CD4-positive, alpha-beta memory T cell (primary cell): ENCODE measurements at regions of chr14 and their contacts with region 1.

Region 1: DNA sequence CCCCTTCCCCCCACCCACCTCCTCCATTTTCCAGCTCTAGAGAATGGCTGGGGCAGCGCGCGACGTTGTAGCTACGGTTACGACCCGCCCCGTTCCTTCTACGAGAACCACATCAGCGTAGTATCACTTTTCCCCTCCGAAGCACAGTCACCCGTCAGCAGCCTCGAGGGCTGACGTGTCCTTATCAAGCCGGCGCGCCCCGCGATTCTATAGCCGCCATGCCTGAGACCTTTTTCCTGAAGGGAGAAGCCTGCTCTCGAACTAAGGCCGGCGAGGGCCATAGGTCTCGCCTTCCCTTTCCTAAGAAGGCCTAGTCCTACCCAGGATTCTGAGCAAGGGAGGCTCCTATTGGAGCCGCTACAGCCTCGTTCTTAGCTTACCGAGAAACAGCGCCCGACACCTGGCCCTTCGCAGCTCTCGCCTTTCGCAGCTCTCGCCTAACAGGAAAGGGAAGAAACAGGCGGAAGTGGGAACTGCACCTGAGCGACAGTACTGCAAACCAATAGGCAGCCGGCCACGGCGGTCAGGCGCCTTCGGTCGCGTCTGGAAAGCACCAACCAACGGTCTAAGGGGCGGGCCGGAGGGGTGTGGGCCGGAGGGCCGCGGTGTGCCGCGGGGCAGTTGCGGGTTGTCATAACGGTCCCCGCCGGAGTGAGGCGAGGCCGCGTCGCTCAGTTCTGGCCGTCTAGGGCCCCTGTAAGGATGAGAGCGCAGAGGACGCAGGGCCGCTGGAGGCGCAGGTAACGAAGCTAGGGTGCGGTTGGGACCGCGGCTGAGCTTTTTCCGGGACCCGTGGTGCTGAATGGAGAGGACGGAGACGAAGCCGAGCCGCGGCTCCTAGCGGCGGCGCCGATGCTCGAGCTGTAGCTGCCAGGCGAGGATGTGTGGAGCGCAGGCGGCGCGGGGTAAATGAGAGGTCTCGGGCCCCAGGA is at the starts of genes MGAT2 and RPL36AL:
- DNase-seq: peak; percentile 95 to 97 (median 96)
- H3K4me3 ChIP-seq: peak within 1 kb of the TSS; percentile 99 to 100
- H3K4me3 Mint-ChIP-seq: peak within 1 kb of the TSS; percentile 95 to 99 (median 96)
- H3K27ac ChIP-seq: peak within 1 kb of the TSS; percentile 98
- H3K27ac Mint-ChIP-seq: peak within 1 kb of the TSS; percentile 98 to 100 (median 99)
- H3K4me1 ChIP-seq: peaks cover 65% of the 10 kb centered on the region
- H3K4me1 Mint-ChIP-seq: peaks cover 34 to 69% (median 43%) of the 10 kb centered on the region in 4 donors
- H3K27me3 ChIP-seq: no peaks in the 10 kb centered on the region
- H3K27me3 Mint-ChIP-seq: no peaks in the 10 kb centered on the region
- total RNA-seq, gene MGAT2: 58.5 to 58.7 TPM
- total RNA-seq, gene RPL36AL: 416 to 441 TPM

Region 2: GRCh38 chr14:49447540-49448107 is 172.8 kb before region 1 on chr14:
- CTCF ChIA-PET with region 1: no interaction called
- POLR2A ChIA-PET with region 1: no interaction called
- intact Hi-C with region 1: no loop called
- DNase-seq: no peak
- H3K4me3 ChIP-seq: no peak overlapping the region
- H3K4me3 Mint-ChIP-seq: no peak overlapping the region
- H3K27ac ChIP-seq: no peak overlapping the region
- H3K27ac Mint-ChIP-seq: no peak overlapping the region
- H3K4me1 ChIP-seq: no peaks in the 10 kb centered on the region
- H3K4me1 Mint-ChIP-seq: no peaks in the 10 kb centered on the region
- H3K27me3 ChIP-seq: no peaks in the 10 kb centered on the region
- H3K27me3 Mint-ChIP-seq: peaks cover 7 to 16% of the 10 kb centered on the region in 2 donors

Region 3: GRCh38 chr14:49585803-49586672 is 34.4 kb before region 1 on chr14 and contains the start of gene RPS29:
- CTCF ChIA-PET with region 1: interaction called, 49 read pairs
- POLR2A ChIA-PET with region 1: interaction called, 197 read pairs
- intact Hi-C with region 1: loop called (anchors 1 kb)
- DNase-seq: peak; percentile 98 to 99 (median 99)
- H3K4me3 ChIP-seq: peak within 1 kb of the TSS; percentile 93 to 98
- H3K4me3 Mint-ChIP-seq: peak within 1 kb of the TSS; percentile 87 to 98 (median 95)
- H3K27ac ChIP-seq: peak within 1 kb of the TSS; percentile 95
- H3K27ac Mint-ChIP-seq: peak within 1 kb of the TSS; percentile 88 to 100 (median 99)
- H3K4me1 ChIP-seq: peaks cover 38% of the 10 kb centered on the region
- H3K4me1 Mint-ChIP-seq: peaks cover 29 to 62% (median 42%) of the 10 kb centered on the region in 4 donors
- H3K27me3 ChIP-seq: no peaks in the 10 kb centered on the region
- H3K27me3 Mint-ChIP-seq: peaks cover 0 to 4% of the 10 kb centered on the region in 2 donors
- total RNA-seq, gene RPS29: 3,602 to 3,749 TPM

Region 4: GRCh38 chr14:49607583-49607982 is 12.9 kb before region 1 on chr14:
- CTCF ChIA-PET with region 1: interaction called, 10 read pairs
- POLR2A ChIA-PET with region 1: interaction called, 21 read pairs
- intact Hi-C with region 1: no loop called
- DNase-seq: no peak
- H3K4me3 ChIP-seq: no peak overlapping the region
- H3K4me3 Mint-ChIP-seq: no peak overlapping the region
- H3K27ac ChIP-seq: no peak overlapping the region
- H3K27ac Mint-ChIP-seq: peak overlapping the region in 1 of 7 donors; percentile 69
- H3K4me1 ChIP-seq: no peaks in the 10 kb centered on the region
- H3K4me1 Mint-ChIP-seq: peaks cover 0 to 14% (median 4%) of the 10 kb centered on the region in 4 donors
- H3K27me3 ChIP-seq: no peaks in the 10 kb centered on the region
- H3K27me3 Mint-ChIP-seq: no peaks in the 10 kb centered on the region

Region 5: DNA sequence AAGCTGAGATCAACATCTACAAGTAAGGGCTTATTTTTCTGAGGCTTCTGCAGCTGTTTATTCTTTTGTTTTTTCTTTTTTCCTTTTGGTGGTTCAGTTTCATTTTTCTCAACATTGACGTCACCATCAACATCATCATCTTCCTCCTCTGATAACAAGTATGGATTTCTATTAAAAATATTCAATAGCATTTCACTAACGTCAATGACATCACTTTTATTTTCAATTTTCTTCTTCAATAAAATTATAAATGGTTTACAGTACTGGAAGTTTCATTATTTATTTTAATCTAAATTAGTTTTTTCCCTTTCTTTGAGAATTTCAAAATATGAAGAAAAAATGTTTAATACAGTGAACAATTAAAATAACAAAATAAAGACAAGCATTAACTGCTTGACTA is 208.2 kb after region 1 on chr14:
- CTCF ChIA-PET with region 1: interaction called, 5 read pairs
- POLR2A ChIA-PET with region 1: no interaction called
- intact Hi-C with region 1: loop called (anchors 1 kb)
- DNase-seq: no peak
- H3K4me3 ChIP-seq: no peak overlapping the region
- H3K4me3 Mint-ChIP-seq: no peak overlapping the region
- H3K27ac ChIP-seq: no peak overlapping the region
- H3K27ac Mint-ChIP-seq: no peak overlapping the region
- H3K4me1 ChIP-seq: no peaks in the 10 kb centered on the region
- H3K4me1 Mint-ChIP-seq: peaks cover 0 to 9% (median 2%) of the 10 kb centered on the region in 4 donors
- H3K27me3 ChIP-seq: no peaks in the 10 kb centered on the region
- H3K27me3 Mint-ChIP-seq: no peaks in the 10 kb centered on the region

Region 6: GRCh38 chr14:50231475-50232275 is 611.2 kb after region 1 on chr14 and contains the start of gene SOS2:
- CTCF ChIA-PET with region 1: no interaction called
- POLR2A ChIA-PET with region 1: interaction called, 4 read pairs
- intact Hi-C with region 1: loop called (anchors 2 kb)
- DNase-seq: peak; percentile 83 to 89 (median 83)
- H3K4me3 ChIP-seq: peak within 1 kb of the TSS; percentile 50 to 81
- H3K4me3 Mint-ChIP-seq: peak within 1 kb of the TSS; percentile 86 to 97 (median 90)
- H3K27ac ChIP-seq: peak within 1 kb of the TSS; percentile 81
- H3K27ac Mint-ChIP-seq: peak within 1 kb of the TSS; percentile 90 to 98 (median 95)
- H3K4me1 ChIP-seq: peaks cover 48% of the 10 kb centered on the region
- H3K4me1 Mint-ChIP-seq: peaks cover 27 to 56% (median 38%) of the 10 kb centered on the region in 4 donors
- H3K27me3 ChIP-seq: no peaks in the 10 kb centered on the region
- H3K27me3 Mint-ChIP-seq: no peaks in the 10 kb centered on the region
- total RNA-seq, gene SOS2: 42.1 to 43.4 TPM